ENCODE measurements at regions of chr21 and their contacts with region 1.

Region 1: GRCh38 chr21:45555551-45556301 is 13.5 kb upstream of the SLC19A1 start:
- DNase-seq: peak; percentile 94

Region 2: DNA sequence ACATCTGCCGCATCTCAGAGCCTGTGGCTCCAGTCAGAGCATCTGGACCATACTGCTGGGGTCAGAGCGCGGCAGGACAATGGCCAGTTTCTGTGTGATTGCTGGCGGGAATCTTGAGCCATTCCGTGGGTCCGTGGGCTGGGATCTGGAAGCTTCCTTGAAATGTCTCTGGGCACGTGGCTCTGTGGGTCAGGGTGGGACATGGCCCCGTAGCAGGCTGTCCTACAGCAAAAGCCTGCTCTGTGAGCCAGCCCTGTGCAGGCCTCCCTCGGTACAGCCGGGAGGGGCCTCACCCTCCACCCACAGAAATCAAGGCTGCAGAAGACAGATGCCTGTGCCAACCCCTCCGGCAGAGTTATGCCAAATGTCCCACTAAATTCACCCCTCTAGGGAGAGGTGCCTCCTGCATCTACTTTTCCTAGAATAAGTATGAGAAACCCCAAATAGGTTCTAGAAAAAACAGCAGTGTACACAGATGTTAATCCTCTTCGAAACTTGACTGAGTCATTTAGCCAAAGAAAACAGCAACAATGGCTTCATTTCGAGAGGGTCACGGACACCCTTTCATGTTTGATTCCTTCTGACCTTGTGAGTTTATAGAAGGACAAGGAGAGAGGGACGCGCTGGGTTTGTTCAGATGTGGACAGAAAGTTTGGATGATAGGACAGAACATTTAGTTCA is 123.0 kb before region 1 on chr21:
- CTCF ChIA-PET with region 1: no interaction called
- POLR2A ChIA-PET with region 1: no interaction called
- DNase-seq: no peak

Region 3: DNA sequence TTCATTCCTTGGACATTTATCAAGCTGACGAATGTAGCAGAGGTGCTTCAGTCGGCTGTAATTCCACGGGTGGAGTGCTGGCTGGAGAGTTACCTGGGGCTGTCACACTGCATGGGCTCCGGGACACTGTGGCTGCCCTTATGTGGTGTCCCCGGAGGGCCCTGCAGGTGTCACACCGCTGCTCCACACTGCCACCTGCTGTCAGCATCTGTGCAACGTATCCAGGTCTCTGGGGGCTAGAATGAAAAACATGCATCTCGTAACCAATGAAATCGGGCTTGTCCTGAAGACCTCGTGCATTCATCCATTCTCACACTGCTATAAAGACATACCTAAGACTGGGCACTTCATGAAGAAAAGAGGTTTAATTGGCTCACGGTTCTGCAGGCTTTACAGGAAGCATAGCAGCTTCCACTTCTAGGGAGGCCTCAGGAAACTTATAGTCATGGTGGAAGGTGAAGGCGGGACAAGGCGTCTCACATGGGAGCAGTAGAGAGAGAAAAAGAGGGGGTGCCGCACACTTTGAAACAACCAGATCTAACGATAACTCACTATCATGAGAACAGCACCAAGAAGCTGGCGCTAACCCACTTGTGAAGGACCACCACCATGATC is 41.1 kb after region 1 on chr21:
- CTCF ChIA-PET with region 1: interaction called, 30 read pairs
- POLR2A ChIA-PET with region 1: interaction called, 9 read pairs
- DNase-seq: peak; percentile 86

Measured in HEK293T (cell line).